ENCODE measurements at regions of chr22 and their contacts with region 1.

Region 1: GRCh38 chr22:39532215-39533071 is at the start of gene RPS19BP1:
- DNase-seq: peak; percentile 100
- H3K4me3 Mint-ChIP-seq: peak within 1 kb of the TSS; percentile 97
- H3K27ac Mint-ChIP-seq: peak within 1 kb of the TSS; percentile 91
- H3K4me1 Mint-ChIP-seq: peaks cover 50% of the 10 kb centered on the region
- H3K27me3 Mint-ChIP-seq: peaks cover 3% of the 10 kb centered on the region
- total RNA-seq, gene RPS19BP1: 96.2 and 96.9 TPM in 2 replicates

Region 2: GRCh38 chr22:39490135-39490798 is 42.2 kb before region 1 on chr22:
- intact Hi-C with region 1: loop called (anchors 1 kb)
- DNase-seq: peak; percentile 93
- H3K4me3 Mint-ChIP-seq: no peak overlapping the region
- H3K27ac Mint-ChIP-seq: no peak overlapping the region
- H3K4me1 Mint-ChIP-seq: peaks cover 15% of the 10 kb centered on the region
- H3K27me3 Mint-ChIP-seq: no peaks in the 10 kb centered on the region

Region 3: GRCh38 chr22:39502109-39502788 is 30.2 kb before region 1 on chr22 and contains the start of gene MIEF1:
- intact Hi-C with region 1: loop called (anchors 1 kb)
- DNase-seq: peak; percentile 97
- H3K4me3 Mint-ChIP-seq: peak within 1 kb of the TSS; percentile 100
- H3K27ac Mint-ChIP-seq: peak within 1 kb of the TSS; percentile 98
- H3K4me1 Mint-ChIP-seq: peaks cover 25% of the 10 kb centered on the region
- H3K27me3 Mint-ChIP-seq: peaks cover 3% of the 10 kb centered on the region
- total RNA-seq, gene MIEF1: 53.7 and 54.8 TPM in 2 replicates

Region 4: DNA sequence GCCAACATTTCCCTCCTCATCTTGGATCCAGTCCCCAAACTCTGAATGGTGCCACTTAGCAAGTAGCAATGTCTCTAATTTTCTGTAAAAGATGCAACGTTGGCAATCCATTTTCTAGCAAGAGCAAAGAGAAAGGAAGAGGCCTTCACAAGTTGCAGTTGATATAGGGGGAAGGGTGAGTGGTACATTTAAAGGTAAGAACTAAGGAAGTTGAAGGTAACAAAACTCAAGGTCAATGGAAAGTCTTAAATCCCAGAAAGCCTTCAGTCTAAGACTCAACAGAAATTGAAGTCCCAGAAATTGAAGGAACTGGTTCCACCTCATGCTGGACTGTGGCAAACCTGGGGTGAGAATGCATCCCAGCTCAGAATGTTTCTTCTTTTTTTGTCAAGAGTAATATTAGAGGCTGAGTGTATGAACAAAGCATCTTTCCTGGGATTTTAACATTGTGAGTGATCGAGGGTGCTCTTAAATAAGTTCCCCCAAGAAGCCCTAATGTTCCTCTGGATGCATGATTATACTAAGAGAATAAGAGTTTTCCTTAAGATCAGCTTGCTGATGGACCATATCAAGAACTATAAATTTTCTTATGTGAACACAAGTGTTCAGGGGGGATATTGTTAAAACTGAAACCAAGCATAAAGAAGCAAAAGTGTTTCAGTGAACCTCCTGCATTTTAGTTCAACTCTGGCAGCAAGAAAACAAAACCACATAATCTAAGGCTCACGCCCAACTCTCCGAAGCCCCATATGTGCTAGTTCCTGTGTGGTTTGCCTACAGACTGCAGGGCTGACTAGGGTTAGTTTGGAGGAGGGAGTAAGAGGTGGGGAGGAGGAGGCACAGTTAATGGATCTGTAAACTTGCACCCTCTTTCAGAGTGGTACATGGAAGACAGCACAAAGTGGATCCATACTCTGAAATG is 368.1 kb after region 1 on chr22 and contains the start of gene GRAP2:
- intact Hi-C with region 1: loop called (anchors 5 kb)
- DNase-seq: peak; percentile 93
- H3K4me3 Mint-ChIP-seq: peak within 1 kb of the TSS; percentile 84
- H3K27ac Mint-ChIP-seq: peak within 1 kb of the TSS; percentile 82
- H3K4me1 Mint-ChIP-seq: peaks cover 24% of the 10 kb centered on the region
- H3K27me3 Mint-ChIP-seq: no peaks in the 10 kb centered on the region
- total RNA-seq, gene GRAP2: 34.4 and 38.4 TPM in 2 replicates

Region 5: DNA sequence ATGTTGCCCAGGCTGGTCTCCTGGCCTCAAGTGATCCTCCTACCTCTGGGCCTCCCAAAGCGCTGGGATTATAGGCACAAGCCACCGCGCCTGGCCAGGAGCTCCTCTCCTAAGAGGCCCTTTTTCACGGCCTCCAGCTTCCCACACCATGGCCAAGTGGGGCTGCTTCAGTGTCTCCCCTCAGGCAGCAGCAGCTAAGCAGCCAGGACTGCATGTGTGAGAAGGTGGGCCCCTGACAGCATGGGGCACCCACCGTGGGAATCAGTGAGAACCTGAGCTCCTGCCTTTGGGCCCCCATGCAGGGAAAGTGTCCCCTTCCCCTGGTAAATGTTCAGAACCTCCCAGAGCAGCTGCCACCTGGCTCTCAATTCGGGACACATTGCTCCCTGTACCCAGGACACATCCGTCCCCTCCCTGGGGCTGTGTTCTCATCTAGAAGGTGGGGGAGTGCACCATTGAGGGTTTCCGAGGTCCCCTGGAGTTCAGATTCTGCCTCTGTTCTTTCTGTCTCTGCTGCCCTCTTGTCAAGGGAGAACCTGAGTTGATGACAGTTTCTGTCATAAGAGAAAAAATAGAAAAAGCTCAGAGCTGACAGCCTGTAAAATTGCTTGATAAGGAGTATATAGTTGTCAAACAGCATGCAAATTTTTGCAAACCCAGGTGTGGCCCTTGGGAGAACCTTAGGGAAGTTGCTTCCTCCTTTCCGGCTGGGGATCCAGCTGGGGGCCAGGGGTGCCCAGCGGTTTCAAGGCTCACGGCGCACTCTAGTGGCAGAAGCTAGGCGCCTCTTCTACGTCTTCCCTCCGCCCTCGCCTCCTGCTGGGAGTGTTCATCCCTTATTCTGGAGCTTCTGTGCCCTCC is 492.0 kb after region 1 on chr22:
- intact Hi-C with region 1: loop called (anchors 1 kb)
- DNase-seq: peak; percentile 87
- H3K4me3 Mint-ChIP-seq: no peak overlapping the region
- H3K27ac Mint-ChIP-seq: no peak overlapping the region
- H3K4me1 Mint-ChIP-seq: peaks cover 2% of the 10 kb centered on the region
- H3K27me3 Mint-ChIP-seq: no peaks in the 10 kb centered on the region

Region 6: GRCh38 chr22:40044102-40044869 is 511.8 kb after region 1 on chr22:
- intact Hi-C with region 1: loop called (anchors 1 kb)
- DNase-seq: peak; percentile 100
- H3K4me3 Mint-ChIP-seq: peak overlapping the region; percentile 92
- H3K27ac Mint-ChIP-seq: peak overlapping the region; percentile 99
- H3K4me1 Mint-ChIP-seq: peaks cover 14% of the 10 kb centered on the region
- H3K27me3 Mint-ChIP-seq: peaks cover 9% of the 10 kb centered on the region

Region 7: DNA sequence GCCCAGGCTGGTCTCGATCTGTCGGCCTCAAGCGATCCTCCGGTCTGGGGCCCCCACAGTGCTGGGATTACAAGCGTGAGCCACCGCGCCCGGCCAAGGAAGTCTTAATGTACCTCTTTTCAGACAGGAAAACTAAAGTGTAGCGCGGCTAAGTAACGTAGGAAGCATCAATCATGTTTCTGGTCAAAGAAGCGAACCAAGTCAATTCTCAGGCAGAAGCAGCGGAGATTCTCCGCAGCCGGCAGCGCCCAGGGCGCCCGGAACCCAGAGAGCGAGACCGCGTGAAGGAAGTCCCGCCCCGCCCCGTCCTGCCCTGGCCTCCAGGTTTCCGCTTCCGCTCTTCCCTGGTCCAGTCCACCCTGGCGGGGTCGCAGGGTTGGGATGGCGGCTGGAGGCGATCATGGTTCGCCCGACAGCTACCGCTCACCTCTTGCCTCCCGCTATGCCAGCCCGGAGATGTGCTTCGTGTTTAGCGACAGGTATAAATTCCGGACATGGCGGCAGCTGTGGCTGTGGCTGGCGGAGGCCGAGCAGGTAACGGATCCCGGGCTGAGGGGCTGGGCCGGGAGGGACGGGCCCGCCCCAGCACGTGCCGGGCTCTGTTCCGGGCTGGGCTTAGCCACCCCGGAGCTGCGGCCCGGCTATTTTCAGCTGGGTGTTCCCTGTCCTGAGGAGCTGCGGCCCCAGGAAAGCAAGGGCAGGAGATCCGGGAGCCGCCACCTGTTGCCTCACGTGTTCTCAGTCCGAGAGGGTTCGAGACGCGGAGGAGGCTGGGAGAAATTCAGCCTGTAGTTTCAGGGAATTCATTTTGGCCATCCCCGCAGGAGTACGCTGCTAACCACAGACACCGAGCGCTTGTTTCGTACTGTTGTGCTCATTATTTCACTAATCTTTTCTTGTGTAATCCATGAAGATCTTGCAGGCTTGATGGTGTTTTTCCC is 814.0 kb after region 1 on chr22 and contains the start of gene ADSL:
- intact Hi-C with region 1: loop called (anchors 2 kb)
- DNase-seq: peak; percentile 96
- H3K4me3 Mint-ChIP-seq: peak within 1 kb of the TSS; percentile 93
- H3K27ac Mint-ChIP-seq: peak within 1 kb of the TSS; percentile 97
- H3K4me1 Mint-ChIP-seq: peaks cover 38% of the 10 kb centered on the region
- H3K27me3 Mint-ChIP-seq: no peaks in the 10 kb centered on the region
- total RNA-seq, gene ADSL: 172 and 173 TPM in 2 replicates

Measured in activated CD4-positive, alpha-beta T cell treated with anti-CD3 and anti-CD28 coated beads, Interleukin-2, amount 10 ng/mL, durations not matched to agents 24 days and 14 days (primary cell).